ENCODE measurements at regions of chr2 and their contacts with region 1.

Region 1: GRCh38 chr2:122368576-122369243 is 613.3 kb downstream of the TSN start:
- DNase-seq: no peak
- H3K4me3 ChIP-seq: no peak overlapping the region
- H3K27ac ChIP-seq: no peak overlapping the region
- H3K4me1 ChIP-seq: no peaks in the 10 kb centered on the region
- H3K27me3 ChIP-seq: no peaks in the 10 kb centered on the region
- CTCF ChIP-seq: peak in 1 of 2 donors; percentile 19

Region 2: GRCh38 chr2:121907928-121908327 is 460.8 kb before region 1 on chr2:
- CTCF ChIA-PET with region 1: no interaction called
- dilution Hi-C with region 1: no loop called
- in situ Hi-C with region 1: no loop called
- intact Hi-C with region 1: loop called (anchors 5 kb)
- DNase-seq: no peak
- H3K4me3 ChIP-seq: no peak overlapping the region
- H3K27ac ChIP-seq: no peak overlapping the region
- H3K4me1 ChIP-seq: no peaks in the 10 kb centered on the region
- H3K27me3 ChIP-seq: peaks cover 1% of the 10 kb centered on the region
- CTCF ChIP-seq: no peak

Region 3: DNA sequence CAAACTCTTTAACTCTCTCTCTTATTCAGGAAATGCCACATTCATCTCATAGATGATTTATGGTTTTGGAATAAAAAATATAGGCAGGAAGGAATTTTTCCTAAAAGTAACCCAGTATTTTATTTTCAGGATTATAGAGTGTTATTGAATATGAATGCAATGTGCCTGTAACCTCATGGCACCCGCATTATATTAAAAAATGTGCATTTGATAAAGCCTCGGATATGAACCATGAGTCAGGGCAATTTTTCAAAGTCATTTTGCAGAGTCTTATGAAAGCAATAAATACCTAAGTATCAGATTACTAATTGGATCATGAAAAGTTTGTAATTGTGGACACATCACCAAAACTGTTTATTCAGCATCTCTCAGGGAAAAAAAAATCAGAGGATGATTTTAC is 39.4 kb before region 1 on chr2:
- CTCF ChIA-PET with region 1: no interaction called
- dilution Hi-C with region 1: no loop called
- in situ Hi-C with region 1: no loop called
- intact Hi-C with region 1: no loop called
- DNase-seq: no peak
- H3K4me3 ChIP-seq: no peak overlapping the region
- H3K27ac ChIP-seq: no peak overlapping the region
- H3K4me1 ChIP-seq: no peaks in the 10 kb centered on the region
- H3K27me3 ChIP-seq: peaks cover under 1% of the 10 kb centered on the region
- CTCF ChIP-seq: no peak

Region 4: DNA sequence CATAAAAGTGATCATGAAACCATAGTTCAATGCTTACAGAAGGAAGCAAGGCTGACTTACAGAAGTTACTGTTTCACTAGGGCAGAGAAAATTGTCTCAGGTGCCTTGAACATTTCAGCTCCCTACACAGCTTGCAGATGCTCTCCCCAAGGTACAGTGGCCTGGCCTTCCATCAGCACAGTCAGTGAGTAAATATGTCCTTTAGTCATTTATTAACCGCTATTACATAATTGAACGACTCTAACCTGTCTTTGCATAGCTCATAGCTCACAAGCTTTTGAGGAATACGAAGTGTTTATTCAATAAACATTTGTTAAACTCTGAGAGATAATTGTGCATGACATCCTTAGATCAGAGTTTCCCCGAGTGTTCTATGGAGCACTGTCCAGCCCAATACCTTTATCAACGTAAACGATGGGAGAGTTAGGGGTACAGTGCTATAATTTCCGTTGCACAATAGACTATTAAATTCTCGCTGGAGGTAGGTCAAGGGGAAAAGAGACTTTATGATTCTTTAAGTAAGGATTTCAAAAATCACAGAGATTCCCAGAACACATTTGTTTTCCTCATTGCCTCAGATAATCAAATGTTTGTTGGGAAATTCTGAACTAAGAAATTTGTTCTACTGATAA is 64.5 kb after region 1 on chr2:
- CTCF ChIA-PET with region 1: no interaction called
- dilution Hi-C with region 1: no loop called
- in situ Hi-C with region 1: no loop called
- intact Hi-C with region 1: no loop called
- DNase-seq: no peak
- H3K4me3 ChIP-seq: no peak overlapping the region
- H3K27ac ChIP-seq: no peak overlapping the region
- H3K4me1 ChIP-seq: no peaks in the 10 kb centered on the region
- H3K27me3 ChIP-seq: no peaks in the 10 kb centered on the region
- CTCF ChIP-seq: no peak